ENCODE measurements at regions of chr3 and their contacts with region 1.

Region 1: DNA sequence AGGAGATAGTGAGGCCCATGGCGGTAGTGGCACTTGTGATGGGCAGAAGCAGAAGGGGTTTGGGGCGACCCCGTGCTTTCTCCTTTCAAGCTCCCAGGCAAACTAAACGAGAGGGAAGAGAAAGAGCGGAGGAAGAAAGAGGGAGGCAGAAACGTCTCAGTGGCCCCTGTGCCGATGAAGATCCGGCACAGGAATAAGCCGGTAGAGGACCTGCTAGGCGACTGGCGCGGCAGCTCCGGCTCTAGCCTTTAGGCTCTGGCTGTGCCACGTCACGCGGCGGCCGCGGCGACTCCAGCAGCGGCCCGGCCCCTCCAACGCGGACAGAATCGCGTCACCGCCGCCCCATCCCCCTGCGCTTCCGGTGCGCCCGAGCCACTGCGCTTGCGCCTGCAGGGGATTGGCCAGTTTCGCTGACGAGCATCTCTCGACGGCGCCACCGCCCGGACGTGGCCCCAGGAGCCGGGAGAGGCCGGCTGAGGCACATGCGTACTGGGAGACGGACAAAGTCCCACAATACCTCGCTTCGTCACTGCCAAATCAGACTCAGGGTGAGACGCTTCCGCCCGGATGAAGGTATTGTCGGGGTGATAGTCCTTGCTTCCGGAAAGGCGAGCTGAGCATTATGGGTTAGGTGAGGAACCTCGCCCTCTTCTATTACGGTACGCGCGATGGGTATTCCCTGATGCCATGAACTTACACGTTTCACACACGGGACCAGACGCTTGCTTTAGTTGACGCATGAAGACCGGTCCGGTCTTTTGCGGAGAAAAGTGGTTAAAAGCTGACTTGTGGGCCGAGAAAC is at the start of gene ARF4:
- DNase-seq: peak; percentile 99
- ATAC-seq: peak; percentile 90
- H3K4me3 Mint-ChIP-seq: peak within 1 kb of the TSS; percentile 93
- H3K27ac Mint-ChIP-seq: peak within 1 kb of the TSS; percentile 98
- H3K4me1 Mint-ChIP-seq: peaks cover 48% of the 10 kb centered on the region
- H3K27me3 Mint-ChIP-seq: no peaks in the 10 kb centered on the region
- total RNA-seq, gene ARF4: 51.0 to 52.9 TPM

Region 2: GRCh38 chr3:57530071-57530608 is 67.2 kb before region 1 on chr3:
- CTCF ChIA-PET with region 1: no interaction called
- POLR2A ChIA-PET with region 1: no interaction called
- DNase-seq: no peak
- ATAC-seq: no peak
- H3K4me3 Mint-ChIP-seq: no peak overlapping the region
- H3K27ac Mint-ChIP-seq: no peak overlapping the region
- H3K4me1 Mint-ChIP-seq: no peaks in the 10 kb centered on the region
- H3K27me3 Mint-ChIP-seq: peaks cover 16% of the 10 kb centered on the region

Region 3: GRCh38 chr3:57555738-57556458 is 41.4 kb before region 1 on chr3 and contains the start of gene PDE12:
- CTCF ChIA-PET with region 1: interaction called, 14 read pairs
- POLR2A ChIA-PET with region 1: interaction called, 80 read pairs
- DNase-seq: peak; percentile 88
- ATAC-seq: peak; percentile 82
- H3K4me3 Mint-ChIP-seq: peak within 1 kb of the TSS; percentile 98
- H3K27ac Mint-ChIP-seq: peak within 1 kb of the TSS; percentile 98
- H3K4me1 Mint-ChIP-seq: peaks cover 29% of the 10 kb centered on the region
- H3K27me3 Mint-ChIP-seq: no peaks in the 10 kb centered on the region
- total RNA-seq, gene PDE12: 27.8 to 31.2 TPM

Region 4: DNA sequence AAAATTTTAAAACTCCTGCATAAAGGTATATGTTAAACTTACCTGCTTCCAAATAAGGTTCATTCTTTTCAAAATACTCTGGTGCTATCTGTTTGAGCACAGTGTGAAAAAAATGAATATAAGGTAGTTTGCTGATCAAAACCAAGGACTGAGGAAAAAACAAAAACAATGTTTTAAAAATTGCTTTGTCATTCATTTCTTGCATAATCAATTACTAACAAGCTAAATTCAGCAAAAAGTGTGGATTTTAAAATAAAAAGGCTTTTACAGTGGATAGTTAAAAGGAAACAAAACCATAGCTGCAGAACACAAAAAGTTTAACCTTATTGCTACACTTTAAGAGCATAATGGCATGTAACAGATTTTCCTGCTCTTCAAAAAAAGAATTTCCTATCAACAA is 64.1 kb after region 1 on chr3:
- CTCF ChIA-PET with region 1: no interaction called
- POLR2A ChIA-PET with region 1: no interaction called
- DNase-seq: no peak
- ATAC-seq: no peak
- H3K4me3 Mint-ChIP-seq: no peak overlapping the region
- H3K27ac Mint-ChIP-seq: no peak overlapping the region
- H3K4me1 Mint-ChIP-seq: no peaks in the 10 kb centered on the region
- H3K27me3 Mint-ChIP-seq: no peaks in the 10 kb centered on the region

Measured in activated CD8-positive, alpha-beta T cell treated with anti-CD3 and anti-CD28 coated beads, Interleukin-2, amount 10 ng/mL, durations not matched to agents 7 days and 5 days (primary cell).